ENCODE measurements at regions of chr22 and their contacts with region 1.

Region 1: DNA sequence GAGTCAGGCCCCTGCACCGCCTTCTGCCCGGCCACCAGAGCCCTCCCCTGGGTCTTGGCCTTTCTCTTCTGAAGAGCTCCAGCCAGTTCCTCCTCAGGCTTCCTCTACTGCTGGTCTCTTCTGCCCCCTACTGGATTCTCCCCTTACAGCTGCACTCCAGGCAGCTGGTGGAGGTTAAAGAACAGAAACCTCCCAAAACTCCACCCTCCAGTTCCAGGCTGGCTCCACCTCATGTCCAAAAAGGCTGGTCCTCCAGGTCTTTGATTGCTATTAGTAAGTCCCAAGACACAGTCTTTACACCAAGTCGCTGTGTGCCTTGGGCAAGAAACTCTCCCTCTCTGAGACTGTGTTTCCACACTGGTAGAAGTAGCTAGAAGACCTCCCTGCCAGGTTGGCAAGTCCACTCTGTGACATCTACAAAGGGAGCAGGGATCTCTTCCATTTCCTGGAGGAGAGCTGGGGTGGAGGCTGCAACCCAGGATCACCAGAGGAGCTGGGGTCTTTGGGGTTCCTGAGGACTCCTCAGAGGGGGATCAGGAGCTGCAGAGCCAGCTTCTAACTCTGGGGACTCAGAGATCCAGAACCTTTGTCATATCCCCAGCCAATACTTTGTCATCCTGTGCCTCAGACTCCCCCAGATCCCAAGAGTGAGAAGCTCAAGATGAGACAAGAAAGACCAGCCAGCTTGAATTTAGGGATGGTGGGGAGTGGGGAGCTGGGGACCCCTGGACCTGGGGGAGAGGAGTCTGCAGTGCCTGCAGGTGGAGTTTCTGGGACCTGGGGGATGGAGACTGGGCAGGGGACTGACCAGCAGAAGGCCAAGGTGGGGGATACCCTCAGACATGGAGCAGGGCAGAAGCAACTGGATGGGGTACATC is 3.4 kb upstream of the IGLL5 start:
- DNase-seq: no peak
- ATAC-seq: peak; percentile 52
- H3K4me3 Mint-ChIP-seq: peak overlapping the region; percentile 28
- H3K27ac Mint-ChIP-seq: peak overlapping the region; percentile 83
- H3K4me1 Mint-ChIP-seq: peaks cover 88% of the 10 kb centered on the region
- H3K27me3 Mint-ChIP-seq: peaks cover 5% of the 10 kb centered on the region
- CTCF ChIP-seq: peak; percentile 75

Region 2: DNA sequence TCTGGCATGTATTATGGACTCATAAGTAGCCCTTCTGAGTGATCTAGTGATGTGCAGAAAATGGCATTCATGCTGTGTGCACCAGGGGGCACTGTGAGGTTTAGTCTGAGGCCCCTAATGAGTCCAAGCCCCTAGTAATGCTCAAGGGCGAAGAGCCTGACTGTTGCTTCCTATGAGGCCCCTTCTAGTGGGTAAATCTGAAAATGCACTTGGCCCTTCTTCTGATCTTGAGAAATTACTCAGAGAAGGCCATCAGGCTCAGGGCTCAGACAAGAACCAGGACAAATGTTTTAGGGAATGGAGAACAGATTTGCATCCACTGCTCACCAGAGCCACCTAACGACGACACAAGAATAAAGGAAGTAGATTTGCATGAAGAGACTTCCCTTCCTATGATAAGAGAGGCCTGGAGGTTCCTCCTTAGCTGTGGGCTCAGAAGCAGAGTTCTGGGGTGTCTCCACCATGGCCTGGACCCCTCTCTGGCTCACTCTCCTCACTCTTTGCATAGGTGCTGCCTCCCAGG is 164.0 kb before region 1 on chr22:
- CTCF ChIA-PET with region 1: interaction called, 13 read pairs
- POLR2A ChIA-PET with region 1: interaction called, 7 read pairs
- intact Hi-C with region 1: loop called (anchors 1 kb)
- DNase-seq: peak; percentile 41
- ATAC-seq: peak; percentile 68
- H3K4me3 Mint-ChIP-seq: peak overlapping the region; percentile 68
- H3K27ac Mint-ChIP-seq: peak overlapping the region; percentile 94
- H3K4me1 Mint-ChIP-seq: peaks cover 58% of the 10 kb centered on the region
- H3K27me3 Mint-ChIP-seq: no peaks in the 10 kb centered on the region
- CTCF ChIP-seq: no peak

Region 3: DNA sequence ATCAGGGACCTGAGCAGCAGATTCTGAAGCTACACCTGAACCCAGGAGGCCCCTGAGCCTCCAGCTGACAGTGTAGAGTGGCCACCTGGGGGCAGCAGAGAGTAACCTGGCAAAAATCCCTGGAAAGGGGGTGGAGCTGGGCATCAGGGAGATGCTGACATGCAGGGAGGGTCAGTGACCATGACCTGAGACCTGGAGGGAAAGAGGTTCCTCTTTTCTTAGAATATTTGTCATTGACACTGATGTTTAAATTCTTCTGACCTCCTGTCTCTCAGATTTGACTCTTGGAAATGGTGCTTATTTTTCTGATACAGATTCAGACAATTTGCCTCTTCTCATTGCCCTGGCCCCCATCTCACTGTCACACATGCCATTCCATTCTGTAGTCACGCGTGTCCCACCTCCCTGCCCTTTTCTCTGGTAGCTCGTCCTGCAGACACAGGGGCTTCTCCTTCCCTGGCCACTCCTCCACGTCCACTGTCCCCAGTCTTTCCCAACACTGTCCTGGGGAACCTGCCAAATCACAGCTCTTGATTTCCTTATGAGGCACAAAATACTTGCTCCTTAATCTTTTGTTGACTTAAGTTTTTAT is 113.9 kb before region 1 on chr22:
- CTCF ChIA-PET with region 1: interaction called, 11 read pairs
- POLR2A ChIA-PET with region 1: no interaction called
- intact Hi-C with region 1: no loop called
- DNase-seq: no peak
- ATAC-seq: peak; percentile 40
- H3K4me3 Mint-ChIP-seq: no peak overlapping the region
- H3K27ac Mint-ChIP-seq: no peak overlapping the region
- H3K4me1 Mint-ChIP-seq: peaks cover 28% of the 10 kb centered on the region
- H3K27me3 Mint-ChIP-seq: peaks cover 17% of the 10 kb centered on the region
- CTCF ChIP-seq: peak; percentile 20

Region 4: GRCh38 chr22:22848364-22848866 is 35.8 kb before region 1 on chr22:
- CTCF ChIA-PET with region 1: interaction called, 119 read pairs
- POLR2A ChIA-PET with region 1: interaction called, 68 read pairs
- intact Hi-C with region 1: loop called (anchors 1 kb)
- DNase-seq: peak; percentile 62
- ATAC-seq: peak; percentile 67
- H3K4me3 Mint-ChIP-seq: no peak overlapping the region
- H3K27ac Mint-ChIP-seq: no peak overlapping the region
- H3K4me1 Mint-ChIP-seq: peaks cover 39% of the 10 kb centered on the region
- H3K27me3 Mint-ChIP-seq: peaks cover 10% of the 10 kb centered on the region
- CTCF ChIP-seq: peak; percentile 79

Region 5: GRCh38 chr22:22870577-22871404 is 13.5 kb before region 1 on chr22:
- CTCF ChIA-PET with region 1: interaction called, 28 read pairs
- POLR2A ChIA-PET with region 1: interaction called, 11 read pairs
- intact Hi-C with region 1: loop called (anchors 1 kb)
- DNase-seq: no peak
- ATAC-seq: peak; percentile 43
- H3K4me3 Mint-ChIP-seq: peak overlapping the region; percentile 15
- H3K27ac Mint-ChIP-seq: peak overlapping the region; percentile 30
- H3K4me1 Mint-ChIP-seq: peaks cover 39% of the 10 kb centered on the region
- H3K27me3 Mint-ChIP-seq: peaks cover 2% of the 10 kb centered on the region
- CTCF ChIP-seq: no peak

Region 6: DNA sequence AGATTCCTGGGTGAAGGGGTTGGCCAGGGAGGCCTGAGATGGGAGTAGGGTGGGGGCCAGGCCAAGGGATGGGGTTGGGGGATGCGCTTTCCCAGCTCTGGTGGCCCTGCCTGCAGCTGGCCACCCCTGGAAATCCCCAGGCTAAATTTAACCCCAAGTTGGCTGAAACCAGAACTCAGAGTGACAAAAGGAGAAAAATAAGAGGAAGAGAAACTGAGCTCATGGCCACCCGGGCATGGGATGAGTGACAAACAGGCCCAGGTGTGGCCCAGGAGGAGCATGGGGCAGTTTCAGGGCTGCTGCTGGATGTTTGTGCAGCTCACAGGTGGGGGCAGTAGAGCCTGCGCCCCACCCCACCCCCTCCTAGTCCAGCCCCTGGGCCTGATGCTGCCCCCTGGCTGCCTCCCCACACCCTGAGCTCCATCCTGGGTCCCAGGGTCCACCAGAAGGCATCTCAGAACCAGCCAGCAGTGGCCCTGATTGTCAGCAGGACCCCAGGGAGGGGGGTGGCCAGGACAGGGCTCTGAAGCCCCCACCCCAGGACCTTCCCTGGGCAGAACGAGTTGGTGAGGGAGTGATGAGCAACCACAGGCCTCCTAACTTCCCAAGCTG is 51.4 kb after region 1 on chr22:
- CTCF ChIA-PET with region 1: interaction called, 365 read pairs
- POLR2A ChIA-PET with region 1: interaction called, 701 read pairs
- intact Hi-C with region 1: loop called (anchors 1 kb)
- DNase-seq: peak; percentile 77
- ATAC-seq: peak; percentile 87
- H3K4me3 Mint-ChIP-seq: peak overlapping the region; percentile 59
- H3K27ac Mint-ChIP-seq: peak overlapping the region; percentile 96
- H3K4me1 Mint-ChIP-seq: peaks cover 98% of the 10 kb centered on the region
- H3K27me3 Mint-ChIP-seq: no peaks in the 10 kb centered on the region
- CTCF ChIP-seq: no peak